ENCODE measurements at regions of chr16 and their contacts with region 1.

Region 1: DNA sequence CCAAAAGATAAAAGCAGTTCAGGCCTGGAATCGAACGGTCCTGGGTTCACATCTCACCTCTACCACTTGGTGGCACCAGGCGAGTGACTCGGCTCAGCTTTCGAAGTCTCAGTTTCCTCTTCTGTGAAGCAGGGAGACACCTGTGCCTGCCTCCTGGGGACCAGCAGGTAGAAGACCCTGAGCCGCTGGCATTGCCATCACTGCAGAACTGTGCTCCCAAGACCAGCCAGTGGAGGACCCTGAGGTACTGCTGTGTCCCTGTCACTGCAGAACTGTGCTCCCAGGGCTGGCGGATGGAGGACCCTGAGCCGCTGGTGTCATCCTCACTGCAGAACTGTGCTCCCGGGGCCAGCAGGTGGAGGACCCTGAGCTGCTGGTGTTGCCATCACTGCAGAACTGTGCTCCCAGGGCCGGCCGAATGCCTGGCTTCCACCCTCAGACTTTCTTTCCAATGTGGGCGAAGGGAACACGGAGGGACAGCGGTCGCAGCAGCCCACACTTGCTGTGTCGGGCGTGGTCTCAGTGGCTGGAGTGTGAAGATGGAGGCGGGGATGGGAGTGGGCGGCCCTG is 8.7 kb upstream of the SLC7A5 start:
- DNase-seq: peak in 1 of 2 experiments; percentile 18
- H3K4me3 ChIP-seq: no peak overlapping the region
- H3K4me3 Mint-ChIP-seq: no peak overlapping the region
- H3K27ac Mint-ChIP-seq: no peak overlapping the region
- H3K4me1 ChIP-seq: peaks cover 38% of the 10 kb centered on the region
- H3K4me1 Mint-ChIP-seq: peaks cover 19% of the 10 kb centered on the region
- H3K27me3 ChIP-seq: no peaks in the 10 kb centered on the region
- H3K27me3 Mint-ChIP-seq: no peaks in the 10 kb centered on the region
- CTCF ChIP-seq: no peak

Region 2: GRCh38 chr16:86498661-86499439 is 1379.2 kb before region 1 on chr16:
- CTCF ChIA-PET with region 1: no interaction called
- POLR2A ChIA-PET with region 1: no interaction called
- intact Hi-C with region 1: no loop called
- DNase-seq: no peak
- H3K4me3 ChIP-seq: no peak overlapping the region
- H3K4me3 Mint-ChIP-seq: no peak overlapping the region
- H3K27ac Mint-ChIP-seq: no peak overlapping the region
- H3K4me1 ChIP-seq: no peaks in the 10 kb centered on the region
- H3K4me1 Mint-ChIP-seq: no peaks in the 10 kb centered on the region
- H3K27me3 ChIP-seq: peaks cover 4% of the 10 kb centered on the region
- H3K27me3 Mint-ChIP-seq: peaks cover 34% of the 10 kb centered on the region
- CTCF ChIP-seq: no peak

Region 3: DNA sequence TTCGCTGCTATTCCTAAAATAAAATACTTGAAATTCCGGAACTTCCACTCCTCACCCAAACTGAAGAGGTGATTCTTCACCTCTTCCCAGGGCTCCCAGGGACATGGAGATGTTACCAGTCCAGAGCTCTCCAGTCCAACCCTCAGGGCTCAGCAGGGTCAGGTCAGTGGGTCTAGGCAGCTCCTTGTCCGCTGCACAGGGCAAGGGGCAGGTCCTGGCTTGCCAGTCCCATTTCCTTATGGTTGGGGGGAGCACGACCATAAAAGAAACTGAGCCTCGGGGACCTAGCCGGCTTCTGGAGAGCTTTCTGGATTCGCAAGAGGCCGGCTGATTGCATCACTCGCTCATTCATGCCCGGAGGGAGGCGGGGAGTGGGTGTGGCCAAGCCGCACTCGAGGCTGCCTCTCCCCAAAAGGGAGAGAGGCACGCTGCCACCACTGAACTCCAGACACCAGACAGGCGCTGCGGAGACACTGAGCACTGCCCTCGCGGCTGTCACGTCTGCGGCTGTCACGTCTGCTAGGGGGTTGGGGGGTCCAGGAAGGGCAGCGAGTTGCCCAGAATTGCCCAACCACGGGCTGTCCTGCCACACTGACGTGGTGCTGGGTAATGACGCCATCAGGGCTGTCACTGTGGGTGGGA is 24.5 kb before region 1 on chr16:
- CTCF ChIA-PET with region 1: interaction called, 106 read pairs
- POLR2A ChIA-PET with region 1: interaction called, 5 read pairs
- intact Hi-C with region 1: no loop called
- DNase-seq: peak; percentile 93 to 95
- H3K4me3 ChIP-seq: peak overlapping the region; percentile 17; the same call in 1 of the 2 replicates
- H3K4me3 Mint-ChIP-seq: peak overlapping the region; percentile 64
- H3K27ac Mint-ChIP-seq: peak overlapping the region; percentile 99
- H3K4me1 ChIP-seq: peaks cover 72% of the 10 kb centered on the region
- H3K4me1 Mint-ChIP-seq: peaks cover 52% of the 10 kb centered on the region
- H3K27me3 ChIP-seq: no peaks in the 10 kb centered on the region
- H3K27me3 Mint-ChIP-seq: no peaks in the 10 kb centered on the region
- CTCF ChIP-seq: no peak

Region 4: DNA sequence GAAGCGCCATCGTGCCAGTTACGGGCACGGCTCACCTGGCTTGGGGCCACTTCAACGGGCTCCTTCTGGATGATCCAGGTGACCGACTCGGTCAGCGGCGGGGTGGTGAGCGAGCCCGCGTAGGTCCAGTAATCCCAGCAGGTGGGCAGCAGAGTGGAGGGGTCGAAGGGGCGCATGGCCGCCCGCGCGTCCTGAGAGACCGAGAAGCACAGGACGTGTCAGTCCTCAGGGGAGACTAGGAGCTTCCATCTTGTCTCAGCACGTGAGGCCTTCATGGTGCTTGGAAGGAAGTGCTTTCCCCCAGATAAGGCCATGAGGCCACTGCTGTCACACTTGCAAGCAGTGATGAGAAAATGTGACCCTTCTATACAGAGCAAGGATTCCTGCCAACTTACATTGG is 13.7 kb after region 1 on chr16:
- CTCF ChIA-PET with region 1: interaction called, 17 read pairs
- POLR2A ChIA-PET with region 1: no interaction called
- intact Hi-C with region 1: no loop called
- DNase-seq: no peak
- H3K4me3 ChIP-seq: no peak overlapping the region
- H3K4me3 Mint-ChIP-seq: no peak overlapping the region
- H3K27ac Mint-ChIP-seq: peak overlapping the region; percentile 39
- H3K4me1 ChIP-seq: no peaks in the 10 kb centered on the region
- H3K4me1 Mint-ChIP-seq: no peaks in the 10 kb centered on the region
- H3K27me3 ChIP-seq: no peaks in the 10 kb centered on the region
- H3K27me3 Mint-ChIP-seq: no peaks in the 10 kb centered on the region
- CTCF ChIP-seq: no peak

Region 5: DNA sequence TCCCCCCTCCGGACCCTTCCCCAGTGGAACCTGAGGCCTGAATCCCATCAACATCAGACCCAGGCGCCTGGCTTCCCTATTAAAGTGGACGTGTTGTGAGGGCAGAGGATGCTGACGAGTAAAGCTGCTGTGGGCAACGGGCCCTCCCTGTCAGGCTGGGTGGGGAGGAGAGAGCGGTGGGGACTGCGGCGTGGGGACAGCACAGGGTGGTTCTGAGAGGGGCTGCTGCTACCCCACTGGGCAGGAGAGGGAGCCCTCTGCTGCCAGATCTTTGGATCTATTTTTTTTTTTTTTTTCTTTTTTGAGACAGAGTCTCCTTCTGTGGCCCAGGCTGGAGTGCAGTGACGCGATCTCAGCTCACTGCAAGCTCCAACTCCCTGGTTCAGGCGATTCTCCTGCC is 52.4 kb after region 1 on chr16:
- CTCF ChIA-PET with region 1: no interaction called
- POLR2A ChIA-PET with region 1: no interaction called
- intact Hi-C with region 1: no loop called
- DNase-seq: peak in 1 of 2 experiments; percentile 55
- H3K4me3 ChIP-seq: no peak overlapping the region
- H3K4me3 Mint-ChIP-seq: no peak overlapping the region
- H3K27ac Mint-ChIP-seq: peak overlapping the region; percentile 29
- H3K4me1 ChIP-seq: no peaks in the 10 kb centered on the region
- H3K4me1 Mint-ChIP-seq: peaks cover 10% of the 10 kb centered on the region
- H3K27me3 ChIP-seq: no peaks in the 10 kb centered on the region
- H3K27me3 Mint-ChIP-seq: no peaks in the 10 kb centered on the region
- CTCF ChIP-seq: peak; percentile 64 to 66

Measured in Caco-2 (cell line).